ENCODE measurements at regions of chr6 and their contacts with region 1.

Region 1: DNA sequence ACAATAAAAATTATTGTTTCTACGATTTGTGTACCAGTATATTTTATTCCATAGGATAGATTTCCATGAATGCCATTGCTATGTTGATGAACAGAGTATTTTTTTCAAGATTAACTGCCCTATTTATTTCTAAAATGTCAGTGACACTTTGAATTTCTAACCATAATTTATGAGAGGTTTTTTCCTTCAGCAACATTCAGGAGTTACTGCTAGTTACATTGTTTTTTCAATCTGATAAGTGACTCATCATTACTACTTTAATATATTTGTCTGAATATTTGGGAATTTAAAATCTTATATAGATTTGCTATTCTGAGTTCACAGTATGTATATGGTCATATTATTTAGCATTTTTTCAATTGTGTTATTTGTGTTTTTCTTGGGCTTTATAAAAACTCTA is 6.0 kb upstream of the OR2B6 start:
- DNase-seq: no peak
- ATAC-seq: no peak
- H3K4me3 ChIP-seq: no peak overlapping the region
- H3K27ac ChIP-seq: no peak overlapping the region
- H3K4me1 ChIP-seq: no peaks in the 10 kb centered on the region
- H3K27me3 ChIP-seq: peaks cover 0 to 18% (median 6%) of the 10 kb centered on the region in 4 donors
- CTCF ChIP-seq: no peak

Region 2: DNA sequence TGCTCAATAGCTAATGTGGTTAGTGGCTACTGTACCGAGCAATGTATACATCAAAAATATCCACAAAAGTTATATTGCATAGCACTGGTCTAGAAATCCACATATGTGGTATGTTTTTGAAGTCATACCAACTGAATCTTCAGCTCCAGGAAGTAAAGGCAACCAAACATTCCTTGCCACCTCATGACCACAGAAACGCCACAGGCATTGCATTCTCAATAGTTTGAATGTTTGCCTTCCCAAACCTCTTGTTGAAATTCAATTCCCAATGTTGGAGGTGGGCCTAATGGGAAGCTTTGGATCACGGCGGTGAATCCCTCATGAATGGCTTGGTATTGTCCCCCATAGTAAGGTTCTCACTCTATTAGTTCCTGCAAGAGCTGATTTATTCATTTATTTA is 580.6 kb before region 1 on chr6:
- intact Hi-C with region 1: no loop called
- DNase-seq: no peak
- ATAC-seq: no peak
- H3K4me3 ChIP-seq: no peak overlapping the region
- H3K27ac ChIP-seq: no peak overlapping the region
- H3K4me1 ChIP-seq: peaks cover 0 to 4% (median 0%) of the 10 kb centered on the region in 3 donors
- H3K27me3 ChIP-seq: no peaks in the 10 kb centered on the region
- CTCF ChIP-seq: no peak

Region 3: DNA sequence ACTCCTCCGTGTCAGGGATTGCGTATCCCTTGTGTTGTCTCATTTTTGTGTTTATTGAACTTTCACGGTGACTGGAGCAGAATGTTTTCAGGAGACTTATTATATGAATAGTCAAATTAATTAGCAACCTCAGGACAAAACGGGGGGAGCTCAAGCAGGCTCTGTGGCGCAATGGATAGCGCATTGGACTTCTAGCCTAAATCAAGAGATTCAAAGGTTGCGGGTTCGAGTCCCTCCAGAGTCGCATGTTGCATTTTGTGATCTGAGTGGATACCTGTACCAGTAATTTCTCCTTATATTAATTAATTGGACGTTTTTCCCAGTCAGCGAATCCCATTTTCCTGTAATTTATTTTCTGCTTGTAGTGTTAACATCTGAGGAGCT is 389.0 kb before region 1 on chr6:
- intact Hi-C with region 1: no loop called
- DNase-seq: no peak
- ATAC-seq: no peak
- H3K4me3 ChIP-seq: no peak overlapping the region
- H3K27ac ChIP-seq: no peak overlapping the region
- H3K4me1 ChIP-seq: no peaks in the 10 kb centered on the region
- H3K27me3 ChIP-seq: peaks cover 5 to 89% (median 19%) of the 10 kb centered on the region in 4 donors
- CTCF ChIP-seq: no peak

Region 4: GRCh38 chr6:27630727-27631608 is 320.1 kb before region 1 on chr6:
- intact Hi-C with region 1: no loop called
- DNase-seq: peak; percentile 8 to 69 (median 24)
- ATAC-seq: peak in 3 of 4 donors; percentile 56 to 76 (median 66)
- H3K4me3 ChIP-seq: peak overlapping the region in 1 of 4 donors; percentile 20
- H3K27ac ChIP-seq: no peak overlapping the region
- H3K4me1 ChIP-seq: peaks cover 0 to 9% (median 4%) of the 10 kb centered on the region in 3 donors
- H3K27me3 ChIP-seq: peaks cover 0 to 41% (median 4%) of the 10 kb centered on the region in 4 donors
- CTCF ChIP-seq: no peak

Region 5: GRCh38 chr6:28011722-28012121 is 60.7 kb after region 1 on chr6:
- intact Hi-C with region 1: loop called in 1 of 3 experiments (anchors 5 kb)
- DNase-seq: no peak
- ATAC-seq: no peak
- H3K4me3 ChIP-seq: no peak overlapping the region
- H3K27ac ChIP-seq: no peak overlapping the region
- H3K4me1 ChIP-seq: no peaks in the 10 kb centered on the region
- H3K27me3 ChIP-seq: peaks cover 0 to 3% (median 0%) of the 10 kb centered on the region in 4 donors
- CTCF ChIP-seq: no peak

Region 6: GRCh38 chr6:28090917-28091586 is 140.0 kb after region 1 on chr6:
- intact Hi-C with region 1: no loop called
- DNase-seq: peak in 1 of 6 donors; percentile 21
- ATAC-seq: no peak
- H3K4me3 ChIP-seq: no peak overlapping the region
- H3K27ac ChIP-seq: no peak overlapping the region
- H3K4me1 ChIP-seq: no peaks in the 10 kb centered on the region
- H3K27me3 ChIP-seq: no peaks in the 10 kb centered on the region
- CTCF ChIP-seq: no peak

Measured in pancreas (tissue), 10 donors.